ENCODE measurements at regions of chr10 and their contacts with region 1.

Region 1: DNA sequence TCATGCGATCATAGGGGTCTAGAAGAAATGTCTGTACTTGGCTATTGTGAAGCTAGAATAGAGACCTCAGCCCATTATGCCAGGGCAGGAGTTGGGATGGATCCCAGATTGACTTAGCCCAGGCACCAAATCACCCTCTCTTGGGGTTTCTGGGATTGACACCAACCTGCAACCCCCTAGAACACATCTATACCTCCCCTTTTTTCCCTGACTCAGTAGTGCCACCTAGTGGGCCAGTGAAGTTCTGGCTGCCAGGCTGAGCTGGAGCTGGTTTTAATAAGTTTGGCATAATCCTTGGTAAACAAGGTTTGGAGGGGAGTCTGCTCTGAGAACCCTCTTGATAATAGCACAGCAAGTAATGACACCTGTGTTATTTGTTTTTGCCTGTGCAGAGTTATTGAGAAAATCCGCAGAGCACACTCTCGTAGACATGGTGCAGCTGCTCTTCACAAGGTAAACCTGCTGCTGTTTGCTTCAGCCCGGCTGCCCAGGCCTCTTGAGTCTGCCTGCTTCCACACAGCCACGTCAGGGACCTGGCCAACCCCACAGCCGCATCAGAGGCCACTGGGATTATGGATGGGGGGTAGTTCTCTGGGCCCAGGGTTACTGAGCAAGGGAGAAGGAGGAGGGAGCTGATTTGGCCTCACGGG is 43.3 kb upstream of the NFKB2 start:
- DNase-seq: no peak
- ATAC-seq: peak; percentile 92
- H3K4me3 ChIP-seq: no peak overlapping the region
- H3K27ac ChIP-seq: no peak overlapping the region
- H3K4me1 ChIP-seq: no peaks in the 10 kb centered on the region
- H3K27me3 ChIP-seq: no peaks in the 10 kb centered on the region
- CTCF ChIP-seq: peak; percentile 86 to 95 (median 93)
- EP300 ChIP-seq: no peak
- POLR2A ChIP-seq: no peak
- RAD21 ChIP-seq: peak; percentile 92

Region 2: DNA sequence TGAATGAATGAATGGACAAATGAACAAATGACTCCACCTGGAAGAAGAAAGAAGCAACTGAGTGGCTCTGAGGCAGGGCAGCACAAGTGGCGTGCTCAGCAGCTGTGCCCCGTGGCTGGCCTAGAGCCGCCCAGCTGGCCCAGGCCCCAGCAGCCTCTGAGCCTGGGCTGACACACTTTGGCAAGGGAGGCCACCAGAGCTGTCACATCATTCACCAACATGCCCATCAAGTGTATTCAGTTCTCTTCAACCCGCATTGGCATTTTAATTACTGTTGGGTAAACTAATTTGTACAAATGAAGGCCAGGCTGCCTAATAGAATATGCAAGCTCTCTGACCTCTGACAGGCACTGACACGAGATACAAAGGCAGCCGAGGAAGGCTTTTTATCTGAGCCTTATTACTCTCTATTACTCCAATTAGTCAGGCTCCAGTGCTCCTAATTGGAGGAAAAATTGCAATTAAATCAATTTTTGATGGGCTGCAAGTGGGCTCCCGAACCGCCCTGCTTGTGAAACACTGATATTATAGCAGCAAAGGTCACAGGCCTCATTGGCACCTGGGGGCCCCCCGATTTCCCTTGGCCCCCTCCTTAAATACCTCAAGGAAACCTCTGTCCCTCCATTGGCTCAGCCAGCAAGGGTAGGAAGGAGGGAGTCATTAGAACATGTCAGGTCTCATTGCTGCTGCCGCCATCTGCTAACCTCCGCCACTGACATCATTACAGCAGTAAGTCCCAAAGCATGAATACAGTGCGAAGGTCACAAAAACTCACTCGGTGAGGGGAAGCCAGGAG is 722.2 kb before region 1 on chr10:
- CTCF ChIA-PET with region 1: no interaction called
- POLR2A ChIA-PET with region 1: no interaction called
- RAD21 ChIA-PET with region 1: no interaction called
- SMC1A ChIA-PET with region 1: no interaction called
- in situ Hi-C with region 1: no loop called
- intact Hi-C with region 1: no loop called
- DNase-seq: no peak
- ATAC-seq: no peak
- H3K4me3 ChIP-seq: no peak overlapping the region
- H3K27ac ChIP-seq: no peak overlapping the region
- H3K4me1 ChIP-seq: no peaks in the 10 kb centered on the region
- H3K27me3 ChIP-seq: no peaks in the 10 kb centered on the region
- CTCF ChIP-seq: no peak
- EP300 ChIP-seq: no peak
- POLR2A ChIP-seq: no peak
- RAD21 ChIP-seq: no peak

Region 3: DNA sequence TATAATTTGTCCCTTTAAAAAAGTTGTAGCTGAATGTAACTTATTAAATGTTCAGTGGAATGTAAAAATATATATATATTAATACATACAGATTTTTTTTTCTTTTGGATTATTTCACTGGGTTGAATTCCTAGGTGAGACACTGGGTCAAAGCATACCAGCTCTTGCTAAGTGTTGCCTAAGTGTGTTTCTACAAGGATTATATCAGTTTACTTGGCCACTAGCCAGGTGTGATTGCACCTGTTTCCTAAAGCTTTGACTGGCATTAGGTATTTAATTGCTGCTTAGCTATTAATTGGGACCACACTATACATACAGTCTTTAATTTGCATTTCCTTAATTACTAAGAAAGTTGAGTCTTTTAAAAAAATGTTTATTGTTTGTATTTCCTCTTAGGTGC is 131.6 kb before region 1 on chr10:
- CTCF ChIA-PET with region 1: interaction called, 632 read pairs
- POLR2A ChIA-PET with region 1: no interaction called
- RAD21 ChIA-PET with region 1: interaction called, 256 read pairs
- SMC1A ChIA-PET with region 1: interaction called, 231 read pairs
- in situ Hi-C with region 1: loop called (anchors 5 kb)
- intact Hi-C with region 1: no loop called
- DNase-seq: no peak
- ATAC-seq: no peak
- H3K4me3 ChIP-seq: no peak overlapping the region
- H3K27ac ChIP-seq: no peak overlapping the region
- H3K4me1 ChIP-seq: no peaks in the 10 kb centered on the region
- H3K27me3 ChIP-seq: no peaks in the 10 kb centered on the region
- CTCF ChIP-seq: no peak
- EP300 ChIP-seq: no peak
- POLR2A ChIP-seq: no peak
- RAD21 ChIP-seq: no peak

Region 4: GRCh38 chr10:102268375-102268888 is 83.8 kb before region 1 on chr10:
- CTCF ChIA-PET with region 1: interaction called, 15 read pairs
- POLR2A ChIA-PET with region 1: no interaction called
- RAD21 ChIA-PET with region 1: interaction called, 8 read pairs
- SMC1A ChIA-PET with region 1: interaction called, 8 read pairs
- in situ Hi-C with region 1: no loop called
- intact Hi-C with region 1: no loop called
- DNase-seq: no peak
- ATAC-seq: peak; percentile 56; the same call in 1 of the 3 replicates
- H3K4me3 ChIP-seq: no peak overlapping the region
- H3K27ac ChIP-seq: no peak overlapping the region
- H3K4me1 ChIP-seq: no peaks in the 10 kb centered on the region
- H3K27me3 ChIP-seq: no peaks in the 10 kb centered on the region
- CTCF ChIP-seq: 0 out of 6 replicates have a peak, but pooled peaks of 1 of the 3 experiments have one; percentile 11
- EP300 ChIP-seq: no peak
- POLR2A ChIP-seq: no peak
- RAD21 ChIP-seq: no peak

Region 5: GRCh38 chr10:102291221-102291905 is 60.8 kb before region 1 on chr10:
- CTCF ChIA-PET with region 1: interaction called, 14 read pairs
- POLR2A ChIA-PET with region 1: interaction called, 4 read pairs
- RAD21 ChIA-PET with region 1: interaction called, 4 read pairs
- SMC1A ChIA-PET with region 1: interaction called, 4 read pairs
- in situ Hi-C with region 1: no loop called
- intact Hi-C with region 1: no loop called
- DNase-seq: no peak
- ATAC-seq: no peak
- H3K4me3 ChIP-seq: no peak overlapping the region
- H3K27ac ChIP-seq: no peak overlapping the region
- H3K4me1 ChIP-seq: no peaks in the 10 kb centered on the region
- H3K27me3 ChIP-seq: no peaks in the 10 kb centered on the region
- CTCF ChIP-seq: no peak
- EP300 ChIP-seq: no peak
- POLR2A ChIP-seq: no peak
- RAD21 ChIP-seq: no peak

Region 6: DNA sequence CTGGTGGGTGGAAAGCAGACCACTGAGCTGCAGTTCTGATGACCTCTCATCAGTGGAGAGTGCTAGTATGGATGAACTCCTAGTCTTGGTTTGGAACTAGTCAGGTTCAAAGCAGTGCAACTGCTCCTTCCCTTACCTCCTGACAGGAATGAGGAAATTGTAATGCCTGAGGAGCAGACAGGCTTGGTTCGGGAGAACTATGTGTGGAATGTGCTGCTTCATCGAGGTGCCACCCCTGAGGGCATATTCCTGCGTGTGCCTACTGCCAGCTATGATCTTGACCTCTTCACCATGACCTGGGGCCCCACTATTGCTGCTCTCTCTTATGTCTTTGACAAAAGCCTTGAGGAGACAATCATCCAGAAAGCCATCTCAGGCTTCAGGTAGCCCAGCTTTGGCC is 15.9 kb after region 1 on chr10:
- CTCF ChIA-PET with region 1: interaction called, 28 read pairs
- POLR2A ChIA-PET with region 1: interaction called, 4 read pairs
- RAD21 ChIA-PET with region 1: interaction called, 3 read pairs
- SMC1A ChIA-PET with region 1: interaction called, 3 read pairs
- in situ Hi-C with region 1: no loop called
- intact Hi-C with region 1: no loop called
- DNase-seq: no peak
- ATAC-seq: no peak
- H3K4me3 ChIP-seq: no peak overlapping the region
- H3K27ac ChIP-seq: no peak overlapping the region
- H3K4me1 ChIP-seq: no peaks in the 10 kb centered on the region
- H3K27me3 ChIP-seq: no peaks in the 10 kb centered on the region
- CTCF ChIP-seq: no peak
- EP300 ChIP-seq: no peak
- POLR2A ChIP-seq: no peak
- RAD21 ChIP-seq: no peak

Region 7: GRCh38 chr10:102476466-102477141 is 124.4 kb after region 1 on chr10:
- CTCF ChIA-PET with region 1: interaction called, 14 read pairs
- POLR2A ChIA-PET with region 1: no interaction called
- RAD21 ChIA-PET with region 1: no interaction called
- SMC1A ChIA-PET with region 1: interaction called, 3 read pairs
- in situ Hi-C with region 1: no loop called
- intact Hi-C with region 1: no loop called
- DNase-seq: no peak
- ATAC-seq: no peak
- H3K4me3 ChIP-seq: no peak overlapping the region
- H3K27ac ChIP-seq: no peak overlapping the region
- H3K4me1 ChIP-seq: no peaks in the 10 kb centered on the region
- H3K27me3 ChIP-seq: no peaks in the 10 kb centered on the region
- CTCF ChIP-seq: no peak
- EP300 ChIP-seq: no peak
- POLR2A ChIP-seq: no peak
- RAD21 ChIP-seq: no peak

Region 8: DNA sequence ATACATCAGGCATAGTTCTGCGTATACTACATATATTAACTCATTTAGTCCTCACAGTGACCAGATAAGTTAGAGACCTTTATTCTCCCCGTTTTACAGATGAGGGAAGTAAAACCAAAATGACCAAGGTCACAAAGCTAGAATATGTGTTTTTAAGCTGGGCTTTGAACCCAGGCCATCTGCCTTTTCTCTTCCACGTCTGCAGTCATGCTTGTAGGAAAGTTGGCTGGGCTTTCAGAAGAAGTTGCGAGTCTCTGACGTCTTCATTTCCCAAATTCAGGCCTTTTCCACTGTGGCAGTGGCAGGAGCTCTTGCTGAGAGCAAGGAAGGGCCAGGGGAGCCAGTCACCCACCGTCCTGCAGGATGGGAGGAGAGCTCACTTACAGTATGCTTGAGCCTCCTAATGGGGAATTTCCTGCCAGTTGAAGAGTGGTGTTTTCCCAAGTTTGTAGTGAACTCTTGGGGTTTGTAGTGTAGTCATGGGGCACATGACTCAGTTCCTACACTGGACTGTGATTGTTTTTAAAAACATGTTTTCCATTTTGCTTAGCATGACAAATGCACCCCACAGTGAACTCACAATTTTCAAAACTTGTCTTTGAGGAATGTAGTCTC is 450.8 kb after region 1 on chr10:
- CTCF ChIA-PET with region 1: no interaction called
- POLR2A ChIA-PET with region 1: no interaction called
- RAD21 ChIA-PET with region 1: no interaction called
- SMC1A ChIA-PET with region 1: no interaction called
- in situ Hi-C with region 1: no loop called
- intact Hi-C with region 1: no loop called
- DNase-seq: peak; percentile 38
- ATAC-seq: peak; percentile 92
- H3K4me3 ChIP-seq: no peak overlapping the region
- H3K27ac ChIP-seq: peak overlapping the region; percentile 63
- H3K4me1 ChIP-seq: peaks cover 17% of the 10 kb centered on the region
- H3K27me3 ChIP-seq: no peaks in the 10 kb centered on the region
- CTCF ChIP-seq: no peak
- EP300 ChIP-seq: 0 out of 4 replicates have a peak, but pooled peaks of 1 of the 2 experiments have one; percentile 14
- POLR2A ChIP-seq: no peak
- RAD21 ChIP-seq: no peak